ENCODE measurements at regions of chr13 and their contacts with region 1.

Region 1: GRCh38 chr13:23960566-23961156 is 63.4 kb upstream of the C1QTNF9B start:
- DNase-seq: no peak
- H3K4me3 ChIP-seq: no peak overlapping the region
- CTCF ChIP-seq: peak; percentile 57

Region 2: DNA sequence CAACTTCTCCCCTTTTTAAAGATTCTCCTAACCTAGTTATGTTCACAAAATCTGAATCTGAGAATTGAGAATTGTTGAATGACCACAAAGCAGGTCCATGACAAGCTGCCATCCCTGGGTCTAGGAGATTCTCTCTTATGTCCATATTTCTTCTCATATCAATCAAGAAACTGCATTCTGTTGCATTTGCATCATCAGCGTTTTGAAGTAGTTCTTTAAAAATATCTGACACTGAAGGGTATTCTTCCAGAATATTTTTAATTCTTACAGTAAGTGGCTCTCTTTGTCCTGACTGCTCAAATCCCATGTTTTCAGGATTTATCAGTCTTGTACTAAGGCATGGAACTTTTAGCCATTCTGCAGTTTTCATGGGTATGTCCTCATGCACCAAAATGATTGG is 621.4 kb before region 1 on chr13:
- CTCF ChIA-PET with region 1: no interaction called
- POLR2A ChIA-PET with region 1: no interaction called
- DNase-seq: no peak
- H3K4me3 ChIP-seq: no peak overlapping the region
- CTCF ChIP-seq: no peak

Region 3: DNA sequence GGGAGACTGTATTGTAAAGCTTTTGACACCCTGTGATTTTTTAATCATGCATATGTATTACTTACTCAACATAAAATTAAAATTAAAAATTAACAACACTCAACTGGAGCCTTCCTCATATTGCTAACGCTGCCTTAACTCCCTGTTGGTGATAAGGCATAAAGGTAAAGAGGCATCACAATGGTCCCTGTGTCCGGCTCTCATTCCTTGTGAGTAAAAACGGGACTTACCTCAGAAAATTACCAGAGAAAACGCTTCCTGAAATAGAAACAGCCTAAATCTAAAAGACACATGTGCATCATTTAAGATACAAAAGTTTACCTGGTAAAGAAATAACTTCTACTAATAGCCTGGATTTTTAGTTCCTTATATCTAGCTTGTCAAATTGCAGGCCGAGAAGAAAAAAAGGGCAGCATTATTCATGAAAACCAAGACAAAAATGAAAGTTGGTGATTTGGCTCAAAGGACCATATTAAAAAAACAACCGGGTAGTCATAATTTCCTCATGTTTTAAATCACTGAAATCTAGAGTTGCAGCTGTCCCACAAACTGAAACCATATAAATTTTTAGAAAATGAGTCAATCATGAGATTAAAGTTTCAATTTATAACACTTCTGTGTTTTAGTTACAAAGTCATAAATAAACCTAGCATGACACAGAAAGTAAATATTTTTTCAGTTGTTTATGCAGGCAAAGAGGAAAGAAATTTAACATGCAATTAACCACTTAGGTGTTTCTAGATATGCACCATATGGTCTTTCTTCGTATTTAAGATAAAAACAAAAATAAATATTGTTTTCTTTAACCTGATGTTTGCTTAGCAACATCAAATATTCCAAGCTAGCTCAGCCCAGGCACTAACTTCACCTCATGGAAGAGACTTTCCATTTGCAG is 166.1 kb before region 1 on chr13:
- CTCF ChIA-PET with region 1: no interaction called
- POLR2A ChIA-PET with region 1: no interaction called
- DNase-seq: no peak
- H3K4me3 ChIP-seq: no peak overlapping the region
- CTCF ChIP-seq: no peak

Region 4: GRCh38 chr13:23909606-23910005 is 51.1 kb before region 1 on chr13:
- CTCF ChIA-PET with region 1: interaction called, 13 read pairs
- POLR2A ChIA-PET with region 1: no interaction called
- DNase-seq: no peak
- H3K4me3 ChIP-seq: no peak overlapping the region
- CTCF ChIP-seq: no peak

Region 5: GRCh38 chr13:23928985-23929384 is 31.7 kb before region 1 on chr13:
- CTCF ChIA-PET with region 1: interaction called, 152 read pairs
- POLR2A ChIA-PET with region 1: no interaction called
- DNase-seq: peak; percentile 59
- H3K4me3 ChIP-seq: no peak overlapping the region
- CTCF ChIP-seq: no peak

Region 6: DNA sequence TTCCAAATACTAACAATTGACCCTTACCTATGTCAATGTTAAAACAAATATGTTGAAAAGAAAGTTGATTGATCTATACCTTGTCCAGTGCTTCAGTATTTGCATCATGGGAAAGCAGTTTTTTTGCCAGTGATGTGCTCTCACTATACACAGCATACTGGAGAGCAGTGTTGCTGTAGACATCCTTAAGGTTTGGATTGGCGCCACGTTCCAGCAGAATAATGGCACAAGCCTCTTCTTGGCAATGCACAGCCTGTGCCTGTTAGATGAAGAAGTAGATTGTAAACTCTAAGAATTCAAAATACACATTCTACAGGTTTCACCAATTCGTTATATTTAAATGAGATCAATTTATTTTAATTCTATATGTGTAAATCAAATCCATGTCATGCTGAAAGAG is 19.4 kb before region 1 on chr13:
- CTCF ChIA-PET with region 1: interaction called, 118 read pairs
- POLR2A ChIA-PET with region 1: no interaction called
- DNase-seq: no peak
- H3K4me3 ChIP-seq: no peak overlapping the region
- CTCF ChIP-seq: no peak

Region 7: GRCh38 chr13:23988546-23989122 is 28.0 kb after region 1 on chr13:
- CTCF ChIA-PET with region 1: interaction called, 14 read pairs
- POLR2A ChIA-PET with region 1: no interaction called
- DNase-seq: no peak
- H3K4me3 ChIP-seq: no peak overlapping the region
- CTCF ChIP-seq: no peak

Region 8: GRCh38 chr13:24005755-24006281 is 45.2 kb after region 1 on chr13:
- CTCF ChIA-PET with region 1: interaction called, 33 read pairs
- POLR2A ChIA-PET with region 1: no interaction called
- DNase-seq: no peak
- H3K4me3 ChIP-seq: no peak overlapping the region
- CTCF ChIP-seq: no peak

Measured in AG04449 (cell line).